ENCODE measurements at regions of chr11 and their contacts with region 1.

Region 1: DNA sequence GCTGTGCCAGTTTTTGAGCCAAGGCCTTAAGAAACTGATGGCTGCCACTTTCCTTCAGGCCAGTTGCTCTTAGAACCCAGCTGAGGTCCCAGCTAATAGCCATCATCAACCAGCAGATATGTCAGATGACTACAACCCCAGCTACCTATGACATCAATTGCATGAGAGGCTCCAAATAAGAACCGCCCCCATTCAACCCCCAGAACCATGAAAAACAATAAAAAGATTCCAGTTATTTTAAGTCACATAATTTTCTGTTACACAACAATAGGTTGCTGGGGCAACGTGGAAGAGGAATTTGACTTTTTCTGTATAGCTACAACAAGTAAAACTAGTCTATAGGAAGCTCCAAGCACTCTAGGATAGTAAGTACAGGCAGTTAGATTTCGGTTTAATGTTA is 216.3 kb upstream of the MTNR1B start:
- DNase-seq: no peak
- H3K4me3 ChIP-seq: no peak overlapping the region
- H3K27ac ChIP-seq: no peak overlapping the region
- H3K4me1 ChIP-seq: no peaks in the 10 kb centered on the region
- H3K27me3 ChIP-seq: no peaks in the 10 kb centered on the region
- CTCF ChIP-seq: no peak
- EP300 ChIP-seq: no peak
- POLR2A ChIP-seq: no peak

Region 2: DNA sequence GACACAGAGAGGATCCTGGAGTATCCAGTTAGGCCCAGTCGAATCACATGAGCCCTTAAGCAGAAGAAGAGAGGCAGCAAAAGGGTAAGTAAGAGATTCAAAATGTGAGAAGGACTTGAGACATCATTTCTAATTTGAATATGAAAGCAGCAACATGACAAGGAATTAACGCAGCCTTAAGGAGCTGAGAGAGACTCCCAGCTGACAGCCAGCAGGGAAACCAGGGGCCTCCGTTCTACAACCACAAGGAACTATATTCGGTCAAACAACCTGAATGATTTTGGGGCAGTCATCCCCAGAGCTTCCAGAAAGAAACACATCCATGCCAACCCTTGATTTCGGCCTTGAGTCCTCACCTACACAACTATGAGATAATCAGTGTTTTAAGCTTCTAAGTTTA is 26.6 kb after region 1 on chr11:
- in situ Hi-C with region 1: no loop called
- intact Hi-C with region 1: loop called (anchors 1 kb)
- DNase-seq: no peak
- H3K4me3 ChIP-seq: no peak overlapping the region
- H3K27ac ChIP-seq: no peak overlapping the region
- H3K4me1 ChIP-seq: no peaks in the 10 kb centered on the region
- H3K27me3 ChIP-seq: no peaks in the 10 kb centered on the region
- CTCF ChIP-seq: no peak
- EP300 ChIP-seq: no peak
- POLR2A ChIP-seq: no peak

Measured in transverse colon (tissue), 4 donors.